ENCODE measurements at regions of chr4 and their contacts with region 1.

Region 1: GRCh38 chr4:111943795-111944203 is 201.5 kb upstream of the FAM241A start:
- DNase-seq: peak in 2 of 3 donors; percentile 23 to 32
- H3K4me3 ChIP-seq: no peak overlapping the region
- H3K4me3 Mint-ChIP-seq: no peak overlapping the region
- H3K27ac ChIP-seq: no peak overlapping the region
- H3K27ac Mint-ChIP-seq: no peak overlapping the region
- H3K4me1 ChIP-seq: no peaks in the 10 kb centered on the region
- H3K4me1 Mint-ChIP-seq: peaks cover 4% of the 10 kb centered on the region
- H3K27me3 ChIP-seq: peaks cover 0 to 4% of the 10 kb centered on the region in 2 donors
- H3K27me3 Mint-ChIP-seq: peaks cover 3 to 9% (median 7%) of the 10 kb centered on the region in 3 donors
- CTCF ChIP-seq: peak; percentile 49

Region 2: GRCh38 chr4:112029771-112030171 is 86.0 kb after region 1 on chr4:
- intact Hi-C with region 1: loop called in 1 of 2 experiments (anchors 10 kb)
- DNase-seq: no peak
- H3K4me3 ChIP-seq: no peak overlapping the region
- H3K4me3 Mint-ChIP-seq: no peak overlapping the region
- H3K27ac ChIP-seq: no peak overlapping the region
- H3K27ac Mint-ChIP-seq: no peak overlapping the region
- H3K4me1 ChIP-seq: no peaks in the 10 kb centered on the region
- H3K4me1 Mint-ChIP-seq: no peaks in the 10 kb centered on the region
- H3K27me3 ChIP-seq: peaks cover 7 to 31% of the 10 kb centered on the region in 2 donors
- H3K27me3 Mint-ChIP-seq: peaks cover 11 to 17% (median 12%) of the 10 kb centered on the region in 3 donors
- CTCF ChIP-seq: no peak

Region 3: DNA sequence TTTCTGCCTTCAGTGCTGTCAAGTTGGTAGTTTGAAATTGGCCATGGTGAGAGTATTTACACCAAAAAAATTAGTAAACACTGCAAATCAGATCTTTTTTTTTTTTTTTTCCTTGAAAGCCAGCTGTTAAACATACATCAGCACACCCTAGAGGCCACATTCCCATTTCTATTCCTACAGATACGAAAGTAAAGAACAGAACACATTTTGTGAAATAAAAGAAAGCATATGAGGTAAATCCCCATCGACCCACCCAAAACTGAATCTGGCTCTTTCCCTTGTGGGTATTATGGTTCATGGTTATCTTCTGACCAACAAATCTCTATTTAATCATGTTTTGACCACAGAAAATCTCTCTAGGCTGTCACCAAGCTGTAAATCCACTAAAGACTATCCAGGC is 246.0 kb after region 1 on chr4:
- intact Hi-C with region 1: no loop called
- DNase-seq: no peak
- H3K4me3 ChIP-seq: no peak overlapping the region
- H3K4me3 Mint-ChIP-seq: no peak overlapping the region
- H3K27ac ChIP-seq: no peak overlapping the region
- H3K27ac Mint-ChIP-seq: no peak overlapping the region
- H3K4me1 ChIP-seq: peaks cover 16 to 17% of the 10 kb centered on the region in 2 donors
- H3K4me1 Mint-ChIP-seq: peaks cover 21% of the 10 kb centered on the region
- H3K27me3 ChIP-seq: no peaks in the 10 kb centered on the region
- H3K27me3 Mint-ChIP-seq: no peaks in the 10 kb centered on the region
- CTCF ChIP-seq: no peak

Measured in CD14-positive monocyte (primary cell).